ENCODE measurements at regions of chr20 and their contacts with region 1.

Region 1: GRCh38 chr20:37527638-37528441 is at the start of gene BLCAP:
- DNase-seq: peak; percentile 90
- H3K4me3 Mint-ChIP-seq: peak within 1 kb of the TSS; percentile 72
- H3K27ac Mint-ChIP-seq: peak within 1 kb of the TSS; percentile 100
- H3K4me1 Mint-ChIP-seq: peaks cover 45% of the 10 kb centered on the region
- H3K27me3 Mint-ChIP-seq: no peaks in the 10 kb centered on the region
- CTCF ChIP-seq: no peak
- total RNA-seq, gene BLCAP: 88.5 and 105 TPM in 2 replicates

Region 2: DNA sequence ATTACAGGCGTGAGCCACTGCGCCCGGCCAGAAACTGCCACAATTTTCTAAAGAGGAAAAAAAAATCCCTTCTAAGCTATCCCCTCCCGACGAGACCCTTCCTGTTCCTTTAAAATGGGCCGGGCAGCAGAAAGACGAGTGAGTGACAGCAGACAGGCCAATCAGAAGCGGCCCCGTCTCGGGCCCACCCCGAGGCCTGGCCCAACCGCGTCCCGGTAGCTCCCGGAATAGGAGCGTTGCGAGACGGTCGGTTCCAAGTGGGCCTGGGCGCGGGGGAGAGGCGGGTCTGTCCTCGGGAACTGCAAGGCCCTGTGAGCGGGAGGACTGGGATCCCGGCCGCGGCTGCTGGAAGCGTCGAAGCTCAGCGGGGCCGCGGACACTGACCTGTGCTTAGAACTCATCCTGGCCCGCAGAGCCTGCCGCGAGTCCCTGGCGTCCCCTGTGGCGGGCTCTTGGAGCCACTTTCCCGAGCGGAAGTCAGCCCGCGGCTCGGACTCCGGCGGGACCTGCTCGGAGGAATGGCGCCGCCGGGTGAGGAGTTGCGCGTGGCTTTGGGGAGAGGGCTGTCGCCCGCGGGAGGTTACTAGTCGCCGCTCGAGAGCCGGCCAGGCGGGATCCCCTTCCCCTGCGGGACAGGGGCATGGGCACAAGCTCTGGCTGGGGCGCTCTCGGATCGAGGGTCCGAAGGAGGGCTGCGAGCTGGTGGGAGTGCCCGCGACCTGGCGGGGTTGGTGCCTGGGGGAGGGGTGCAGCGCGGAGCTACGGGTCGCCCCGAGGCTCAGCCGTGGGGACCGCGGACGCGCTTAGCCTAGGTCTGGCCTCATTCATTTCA is 348.8 kb before region 1 on chr20 and contains the starts of genes MROH8 and RPN2:
- CTCF ChIA-PET with region 1: interaction called, 3 read pairs
- POLR2A ChIA-PET with region 1: interaction called, 68 read pairs
- intact Hi-C with region 1: no loop called
- DNase-seq: peak; percentile 98
- H3K4me3 Mint-ChIP-seq: peak within 1 kb of the TSS; percentile 97
- H3K27ac Mint-ChIP-seq: peak within 1 kb of the TSS; percentile 98
- H3K4me1 Mint-ChIP-seq: peaks cover 25% of the 10 kb centered on the region
- H3K27me3 Mint-ChIP-seq: no peaks in the 10 kb centered on the region
- CTCF ChIP-seq: no peak
- total RNA-seq, gene MROH8: 1.1 and 1.5 TPM in 2 replicates
- total RNA-seq, gene RPN2: 226 and 259 TPM in 2 replicates

Region 3: DNA sequence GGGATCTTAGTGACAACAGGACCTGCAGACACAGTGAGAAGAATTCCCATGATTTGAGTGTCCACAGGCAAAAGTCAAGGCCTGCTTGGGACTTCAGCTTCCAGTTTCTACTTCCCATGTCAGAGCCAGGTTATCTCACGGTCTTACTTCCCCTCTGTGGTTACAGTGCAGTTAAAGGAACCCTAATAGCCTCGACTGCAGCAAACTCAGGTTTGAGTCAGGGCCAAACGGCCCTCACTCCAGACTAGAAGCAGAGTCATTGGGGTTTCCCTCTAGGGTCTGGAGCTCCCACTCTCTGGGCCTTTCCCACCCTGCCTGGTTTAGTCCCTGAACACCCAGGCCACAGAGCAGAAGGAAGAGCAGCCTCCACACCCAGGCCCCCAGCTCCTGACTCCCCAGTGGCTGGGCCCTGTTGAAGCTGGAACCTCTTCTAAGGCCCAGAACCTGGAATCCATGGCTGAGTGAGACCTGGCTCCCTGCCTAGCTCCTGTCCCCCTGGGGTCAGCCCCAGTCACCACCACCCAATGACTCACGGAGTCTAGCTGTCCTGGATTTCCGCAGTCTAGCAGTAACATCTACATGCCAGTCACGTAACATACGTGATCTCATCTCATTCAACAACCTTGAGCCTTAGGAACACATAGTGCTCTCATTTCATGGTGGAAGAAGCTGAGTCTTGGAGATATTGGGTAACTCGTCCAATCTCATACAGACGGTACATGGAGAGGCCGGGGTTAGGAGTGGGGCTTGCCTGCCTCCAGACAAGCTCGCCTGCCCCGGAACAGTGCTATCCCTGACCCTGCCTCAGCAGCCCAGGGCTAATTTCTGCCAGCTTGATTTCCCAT is 257.0 kb before region 1 on chr20:
- CTCF ChIA-PET with region 1: interaction called, 175 read pairs
- POLR2A ChIA-PET with region 1: interaction called, 43 read pairs
- intact Hi-C with region 1: no loop called
- DNase-seq: peak; percentile 64
- H3K4me3 Mint-ChIP-seq: no peak overlapping the region
- H3K27ac Mint-ChIP-seq: no peak overlapping the region
- H3K4me1 Mint-ChIP-seq: peaks cover 15% of the 10 kb centered on the region
- H3K27me3 Mint-ChIP-seq: no peaks in the 10 kb centered on the region
- CTCF ChIP-seq: no peak

Region 4: DNA sequence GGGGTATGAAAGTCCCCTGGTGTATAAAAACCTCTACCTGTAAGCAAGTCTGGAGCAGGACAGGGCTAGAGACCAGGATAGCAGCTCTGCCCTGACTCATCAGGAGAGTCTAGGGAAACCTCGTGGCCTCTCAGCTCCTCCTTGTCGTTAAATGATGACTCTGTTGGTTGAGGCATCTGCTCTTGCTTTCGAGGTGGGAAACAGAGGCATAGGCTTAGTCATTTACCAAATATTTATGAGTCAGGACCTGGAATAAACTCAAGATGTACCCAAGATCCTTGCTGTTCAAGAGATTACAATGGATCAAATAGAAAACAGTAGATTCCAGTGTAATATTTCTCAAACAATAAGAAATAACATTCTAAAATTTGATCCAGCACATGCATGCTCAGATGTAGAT is 232.8 kb before region 1 on chr20:
- CTCF ChIA-PET with region 1: no interaction called
- POLR2A ChIA-PET with region 1: interaction called, 184 read pairs
- intact Hi-C with region 1: no loop called
- DNase-seq: peak; percentile 98
- H3K4me3 Mint-ChIP-seq: peak overlapping the region; percentile 49
- H3K27ac Mint-ChIP-seq: peak overlapping the region; percentile 67
- H3K4me1 Mint-ChIP-seq: peaks cover 54% of the 10 kb centered on the region
- H3K27me3 Mint-ChIP-seq: no peaks in the 10 kb centered on the region
- CTCF ChIP-seq: no peak

Region 5: DNA sequence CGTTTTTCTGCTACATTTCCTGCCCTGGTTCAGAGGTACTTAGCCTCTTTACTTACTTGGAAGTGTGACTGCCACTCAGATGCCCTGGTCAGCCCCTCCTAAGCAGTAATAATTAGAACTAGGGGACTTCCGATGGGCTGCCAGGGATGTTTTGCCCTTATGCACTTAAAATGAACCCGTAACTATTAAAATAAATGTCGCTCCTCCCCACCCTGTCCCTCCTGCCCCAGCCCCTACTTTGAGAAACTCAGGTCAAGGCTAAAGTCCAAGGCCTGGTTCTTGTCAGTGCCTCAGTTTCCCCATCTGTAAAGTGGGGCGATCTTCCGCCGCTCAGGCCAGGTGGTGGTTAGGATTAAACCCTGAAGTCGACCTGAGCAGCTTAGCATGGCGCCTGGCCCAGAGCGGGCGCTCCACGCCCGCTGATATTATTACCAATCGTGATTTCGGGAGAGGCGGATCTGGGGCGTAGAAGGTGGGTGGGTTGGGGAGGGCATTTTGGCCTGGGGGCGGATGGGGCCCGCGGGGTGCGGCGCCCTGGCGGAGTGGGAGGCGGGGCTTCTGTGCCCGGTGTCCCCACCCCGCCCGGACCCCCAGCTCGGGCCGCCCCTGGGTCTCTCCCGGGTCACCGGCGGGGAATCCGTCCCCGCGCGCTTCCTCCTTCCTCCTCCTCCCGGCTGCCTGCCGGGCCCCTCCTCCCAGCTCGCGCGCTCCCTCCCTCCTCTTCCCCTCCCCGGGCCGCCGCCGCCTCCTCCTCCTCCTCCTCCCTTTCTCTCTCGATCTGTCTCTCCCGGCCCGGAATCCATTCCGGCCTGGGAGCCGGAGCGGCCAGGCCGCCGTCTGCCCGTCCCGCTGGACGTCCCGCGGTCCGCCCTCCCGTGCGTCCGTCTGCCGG is 182.3 kb before region 1 on chr20 and contains the start of gene SRC:
- CTCF ChIA-PET with region 1: interaction called, 3 read pairs
- POLR2A ChIA-PET with region 1: interaction called, 12 read pairs
- intact Hi-C with region 1: no loop called
- DNase-seq: peak; percentile 74
- H3K4me3 Mint-ChIP-seq: peak within 1 kb of the TSS; percentile 75
- H3K27ac Mint-ChIP-seq: peak within 1 kb of the TSS; percentile 54
- H3K4me1 Mint-ChIP-seq: peaks cover 25% of the 10 kb centered on the region
- H3K27me3 Mint-ChIP-seq: no peaks in the 10 kb centered on the region
- CTCF ChIP-seq: no peak
- total RNA-seq, gene SRC: 28.1 and 29.5 TPM in 2 replicates

Region 6: DNA sequence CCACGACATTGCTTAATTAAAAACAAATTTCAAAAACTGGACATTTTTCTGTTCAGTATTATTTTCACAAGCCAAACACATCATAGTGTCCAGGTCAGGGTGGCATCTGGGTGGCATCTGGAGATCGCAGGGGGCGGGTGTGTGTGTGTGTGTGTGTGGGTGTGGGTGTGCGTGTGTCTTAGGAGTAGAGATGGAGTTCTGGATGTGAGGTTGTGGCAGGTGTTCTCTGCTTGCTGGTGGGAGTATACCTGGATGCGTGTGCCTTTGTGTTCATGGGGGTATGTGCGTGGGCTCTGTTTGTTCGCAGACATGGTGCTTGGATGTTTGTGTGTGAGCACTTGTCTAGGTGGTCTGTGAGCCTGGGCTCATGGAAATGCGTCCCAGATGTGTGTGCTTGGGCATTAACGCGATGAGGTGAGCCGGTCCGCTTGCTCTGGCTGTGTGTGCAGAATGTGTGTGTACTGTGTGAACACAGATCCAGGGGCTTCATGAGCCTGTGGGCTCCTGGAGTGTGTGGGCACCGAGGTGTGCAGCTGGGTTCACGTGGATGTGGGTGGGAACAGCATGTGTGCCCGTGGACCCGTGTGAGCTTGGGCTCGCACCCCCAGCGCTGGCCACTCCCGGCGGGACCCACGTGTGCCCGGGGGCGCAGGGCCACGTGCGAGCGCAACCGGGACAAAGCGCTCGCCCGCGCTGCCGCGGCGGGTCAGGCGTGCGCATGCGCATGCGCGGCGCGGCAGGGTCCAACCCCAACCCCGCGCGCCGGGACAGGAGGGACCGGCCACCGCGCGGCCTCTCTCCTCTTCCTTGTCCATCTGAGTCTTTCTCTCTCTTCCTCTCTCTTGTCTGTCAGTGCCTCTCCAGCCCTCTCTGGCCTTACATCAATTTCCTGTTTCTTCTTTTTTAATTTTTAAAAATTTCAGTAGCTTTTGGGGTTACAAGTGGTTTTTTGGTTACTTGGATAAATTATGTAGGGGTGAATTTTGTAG is 121.5 kb before region 1 on chr20:
- CTCF ChIA-PET with region 1: no interaction called
- POLR2A ChIA-PET with region 1: interaction called, 3 read pairs
- intact Hi-C with region 1: loop called (anchors 5 kb)
- DNase-seq: peak; percentile 49
- H3K4me3 Mint-ChIP-seq: peak overlapping the region; percentile 64
- H3K27ac Mint-ChIP-seq: no peak overlapping the region
- H3K4me1 Mint-ChIP-seq: peaks cover 12% of the 10 kb centered on the region
- H3K27me3 Mint-ChIP-seq: no peaks in the 10 kb centered on the region
- CTCF ChIP-seq: no peak

Region 7: DNA sequence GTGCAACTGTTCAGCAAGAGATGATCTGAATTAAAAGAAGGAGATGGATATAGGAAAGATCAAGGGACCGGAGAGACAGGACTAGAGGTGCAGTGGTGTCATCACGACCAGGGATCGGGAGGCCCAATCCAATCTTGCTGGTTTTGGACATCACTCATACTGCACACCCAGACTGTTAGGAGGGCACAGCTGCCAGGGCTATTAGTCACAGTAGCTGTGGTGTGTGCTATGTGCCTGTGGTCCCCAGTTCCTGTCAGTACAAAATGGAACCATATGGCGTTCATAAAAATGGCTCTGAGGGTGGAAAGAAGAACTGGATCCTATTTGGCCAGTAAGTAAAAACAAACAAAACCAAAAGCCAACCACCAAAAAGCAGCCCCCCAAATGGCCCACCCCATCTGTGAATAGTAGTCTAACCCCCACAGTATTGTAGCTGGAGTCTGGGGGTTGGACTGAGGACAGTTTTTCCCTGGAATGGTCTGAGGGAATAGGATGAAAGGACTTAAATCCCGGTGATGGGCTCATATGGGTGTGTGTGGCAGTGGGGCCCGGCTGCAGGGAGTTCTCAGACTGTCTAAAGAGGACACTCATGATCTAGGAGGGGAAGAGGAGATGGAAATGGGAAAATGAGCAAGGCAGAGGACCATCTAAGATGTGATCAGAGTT is 16.1 kb before region 1 on chr20:
- CTCF ChIA-PET with region 1: no interaction called
- POLR2A ChIA-PET with region 1: interaction called, 34 read pairs
- intact Hi-C with region 1: no loop called
- DNase-seq: no peak
- H3K4me3 Mint-ChIP-seq: no peak overlapping the region
- H3K27ac Mint-ChIP-seq: no peak overlapping the region
- H3K4me1 Mint-ChIP-seq: peaks cover 10% of the 10 kb centered on the region
- H3K27me3 Mint-ChIP-seq: no peaks in the 10 kb centered on the region
- CTCF ChIP-seq: no peak

Region 8: GRCh38 chr20:37627060-37627769 is 99.4 kb after region 1 on chr20:
- CTCF ChIA-PET with region 1: no interaction called
- POLR2A ChIA-PET with region 1: no interaction called
- intact Hi-C with region 1: no loop called
- DNase-seq: peak; percentile 69
- H3K4me3 Mint-ChIP-seq: no peak overlapping the region
- H3K27ac Mint-ChIP-seq: no peak overlapping the region
- H3K4me1 Mint-ChIP-seq: no peaks in the 10 kb centered on the region
- H3K27me3 Mint-ChIP-seq: peaks cover 73% of the 10 kb centered on the region
- CTCF ChIP-seq: no peak

Region 9: GRCh38 chr20:37723668-37724067 is 195.8 kb after region 1 on chr20:
- CTCF ChIA-PET with region 1: no interaction called
- POLR2A ChIA-PET with region 1: no interaction called
- intact Hi-C with region 1: no loop called
- DNase-seq: no peak
- H3K4me3 Mint-ChIP-seq: no peak overlapping the region
- H3K27ac Mint-ChIP-seq: no peak overlapping the region
- H3K4me1 Mint-ChIP-seq: no peaks in the 10 kb centered on the region
- H3K27me3 Mint-ChIP-seq: no peaks in the 10 kb centered on the region
- CTCF ChIP-seq: no peak

Region 10: DNA sequence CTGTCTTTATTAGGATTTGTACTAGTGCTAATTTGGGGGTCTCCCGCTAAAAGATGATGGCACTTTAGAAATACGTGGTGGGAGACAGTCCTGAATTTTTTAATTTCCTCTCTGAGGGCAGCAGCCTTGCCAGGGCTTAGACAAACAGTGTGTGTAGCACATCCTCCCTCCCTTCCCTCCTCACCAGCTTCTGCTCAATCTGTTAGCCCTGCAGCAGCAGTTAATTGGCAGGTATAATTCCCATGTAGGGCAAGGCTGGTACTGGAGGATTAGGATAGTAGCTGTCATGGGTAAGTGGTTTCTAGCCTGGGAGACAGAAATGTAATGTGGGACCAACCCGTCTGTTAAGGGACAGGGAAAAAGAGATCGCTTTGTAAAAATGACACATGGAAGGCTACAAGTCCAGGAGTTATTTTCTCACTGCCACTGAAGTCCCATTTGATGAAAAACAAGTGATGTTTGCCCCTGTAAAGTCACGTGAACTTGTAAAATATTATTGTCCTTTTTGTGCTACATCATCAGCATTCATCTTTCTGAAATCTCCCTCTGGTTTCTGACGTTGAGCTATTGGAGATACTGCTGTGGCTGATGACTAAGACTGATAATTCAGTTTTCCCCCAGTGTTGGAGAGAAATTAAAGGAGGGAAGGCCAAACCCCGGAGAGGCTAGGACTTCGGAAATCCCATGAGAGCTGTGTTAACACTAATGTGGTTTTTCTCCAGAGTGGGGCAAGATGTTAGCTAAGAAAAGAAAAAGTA is 206.6 kb after region 1 on chr20:
- CTCF ChIA-PET with region 1: no interaction called
- POLR2A ChIA-PET with region 1: no interaction called
- intact Hi-C with region 1: no loop called
- DNase-seq: no peak
- H3K4me3 Mint-ChIP-seq: no peak overlapping the region
- H3K27ac Mint-ChIP-seq: no peak overlapping the region
- H3K4me1 Mint-ChIP-seq: peaks cover 9% of the 10 kb centered on the region
- H3K27me3 Mint-ChIP-seq: no peaks in the 10 kb centered on the region
- CTCF ChIP-seq: no peak

Region 11: DNA sequence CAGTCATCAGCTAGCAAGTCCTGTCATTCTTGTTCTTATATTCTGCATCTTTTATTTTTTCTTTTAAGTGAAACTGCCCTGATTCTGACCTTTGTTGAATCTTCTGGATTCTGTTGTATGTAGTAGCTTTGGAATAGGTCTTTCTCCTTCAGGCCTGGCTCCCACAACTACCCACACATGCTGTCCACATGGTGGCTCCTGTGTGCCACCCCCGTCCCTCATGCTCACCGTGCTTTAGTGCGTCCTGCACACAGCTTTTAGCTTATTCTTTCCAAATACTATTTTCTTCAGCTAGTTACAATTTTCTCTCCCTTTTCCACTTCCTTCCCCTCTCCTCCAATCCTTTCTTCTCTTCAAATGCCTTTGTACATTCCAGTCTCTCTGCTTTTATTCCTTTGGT is 227.8 kb after region 1 on chr20:
- CTCF ChIA-PET with region 1: no interaction called
- POLR2A ChIA-PET with region 1: no interaction called
- intact Hi-C with region 1: no loop called
- DNase-seq: no peak
- H3K4me3 Mint-ChIP-seq: no peak overlapping the region
- H3K27ac Mint-ChIP-seq: no peak overlapping the region
- H3K4me1 Mint-ChIP-seq: no peaks in the 10 kb centered on the region
- H3K27me3 Mint-ChIP-seq: no peaks in the 10 kb centered on the region
- CTCF ChIP-seq: no peak

Measured in MCF 10A (cell line).